ENCODE measurements at regions of chr22 and their contacts with region 1.

Region 1: GRCh38 chr22:17171313-17172171 is 12.5 kb upstream of the HDHD5 start:
- DNase-seq: peak; percentile 82
- ATAC-seq: peak; percentile 93
- H3K4me3 ChIP-seq: peak overlapping the region; percentile 62 to 69
- H3K27ac ChIP-seq: peak overlapping the region; percentile 98
- H3K4me1 ChIP-seq: peaks cover 10% of the 10 kb centered on the region in 2 experiments
- H3K27me3 ChIP-seq: no peaks in the 10 kb centered on the region
- CTCF ChIP-seq: peak; percentile 53 to 88 (median 68); a peak in 5 of 6 replicates
- POLR2A ChIP-seq: peak; percentile 55
- RAD21 ChIP-seq: peak; percentile 24

Region 2: DNA sequence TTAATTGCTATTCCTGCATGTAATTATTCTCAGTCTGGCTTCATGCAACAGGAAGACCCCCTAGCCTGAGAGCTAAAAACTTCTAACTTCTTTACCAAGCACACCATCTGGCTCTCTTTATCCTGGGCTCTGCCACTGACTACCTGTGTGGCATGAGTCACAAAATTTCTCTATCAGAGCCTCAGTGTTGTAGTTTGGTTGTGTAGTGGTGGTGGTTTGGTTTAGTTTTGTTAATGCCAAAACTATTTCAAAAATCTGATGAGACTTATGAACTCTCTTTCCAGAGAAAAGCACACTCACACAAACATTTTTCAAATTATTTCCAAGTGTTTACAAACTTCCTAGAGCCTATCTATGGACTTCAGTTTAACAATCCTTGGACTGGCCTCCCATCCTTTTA is 94.3 kb before region 1 on chr22:
- CTCF ChIA-PET with region 1: interaction called, 53 read pairs
- POLR2A ChIA-PET with region 1: interaction called, 3 read pairs
- RAD21 ChIA-PET with region 1: interaction called, 3 read pairs
- intact Hi-C with region 1: loop called (anchors 1 kb)
- DNase-seq: no peak
- ATAC-seq: no peak; the same call in 1 of the 2 replicates
- H3K4me3 ChIP-seq: no peak overlapping the region
- H3K27ac ChIP-seq: no peak overlapping the region
- H3K4me1 ChIP-seq: peaks cover 9 to 24% of the 10 kb centered on the region in 2 experiments
- H3K27me3 ChIP-seq: no peaks in the 10 kb centered on the region
- CTCF ChIP-seq: no peak
- POLR2A ChIP-seq: no peak
- RAD21 ChIP-seq: no peak

Region 3: DNA sequence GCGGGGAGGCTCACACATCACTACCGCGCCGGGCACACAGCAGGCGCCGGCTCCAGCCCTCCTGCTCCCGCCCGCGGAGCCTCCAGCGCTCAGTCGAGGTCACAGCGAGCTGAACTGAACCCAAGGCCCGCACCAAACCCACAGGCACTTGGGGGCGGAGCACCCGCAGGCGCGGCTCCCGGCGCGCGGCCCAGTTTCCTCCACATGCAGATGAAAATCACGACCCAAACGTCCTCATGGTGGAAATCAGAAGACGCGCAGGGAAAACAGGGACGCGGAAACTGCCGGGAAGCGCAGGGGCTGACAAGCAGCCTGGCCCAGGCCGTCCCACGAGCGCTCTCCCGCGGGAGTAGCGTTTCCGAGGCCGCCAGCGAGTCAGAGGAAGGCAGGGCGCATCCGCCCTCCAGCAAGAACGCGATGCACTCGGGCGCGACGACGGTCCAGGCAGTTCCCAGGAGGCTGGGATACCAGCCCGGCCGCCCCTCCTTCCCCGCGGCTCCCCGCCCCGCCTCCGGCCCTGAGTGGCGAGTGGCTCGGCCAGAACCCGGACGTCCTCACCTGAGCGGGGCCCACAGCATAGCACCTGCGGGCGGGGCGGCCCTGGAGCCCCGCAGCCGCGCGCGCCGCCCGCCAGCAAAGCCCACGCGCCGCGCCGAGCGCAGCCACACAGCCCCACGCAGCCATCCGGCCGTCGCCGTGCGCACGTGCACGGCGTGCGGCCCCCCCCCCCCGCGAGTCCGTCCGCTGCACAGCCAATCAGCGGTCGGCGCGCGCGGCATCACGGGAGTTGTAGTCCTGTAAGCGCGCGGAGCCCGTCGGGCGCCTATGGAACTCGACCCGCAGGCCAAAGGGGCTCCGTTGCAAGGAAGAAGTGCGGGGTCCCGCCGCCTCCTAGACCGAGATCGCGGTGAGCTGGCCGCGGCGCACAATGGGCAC is 12.7 kb before region 1 on chr22 and contains the start of gene HDHD5:
- CTCF ChIA-PET with region 1: interaction called, 125 read pairs
- POLR2A ChIA-PET with region 1: interaction called, 8 read pairs
- RAD21 ChIA-PET with region 1: interaction called, 3 read pairs
- intact Hi-C with region 1: loop called (anchors 1 kb)
- DNase-seq: peak; percentile 67
- ATAC-seq: peak; percentile 84
- H3K4me3 ChIP-seq: peak within 1 kb of the TSS; percentile 71 to 82
- H3K27ac ChIP-seq: peak within 1 kb of the TSS; percentile 94
- H3K4me1 ChIP-seq: peaks cover 16 to 27% of the 10 kb centered on the region in 2 experiments
- H3K27me3 ChIP-seq: no peaks in the 10 kb centered on the region
- CTCF ChIP-seq: no peak
- POLR2A ChIP-seq: peak; percentile 20
- RAD21 ChIP-seq: no peak
- total RNA-seq, gene HDHD5: 70.1 TPM

Region 4: DNA sequence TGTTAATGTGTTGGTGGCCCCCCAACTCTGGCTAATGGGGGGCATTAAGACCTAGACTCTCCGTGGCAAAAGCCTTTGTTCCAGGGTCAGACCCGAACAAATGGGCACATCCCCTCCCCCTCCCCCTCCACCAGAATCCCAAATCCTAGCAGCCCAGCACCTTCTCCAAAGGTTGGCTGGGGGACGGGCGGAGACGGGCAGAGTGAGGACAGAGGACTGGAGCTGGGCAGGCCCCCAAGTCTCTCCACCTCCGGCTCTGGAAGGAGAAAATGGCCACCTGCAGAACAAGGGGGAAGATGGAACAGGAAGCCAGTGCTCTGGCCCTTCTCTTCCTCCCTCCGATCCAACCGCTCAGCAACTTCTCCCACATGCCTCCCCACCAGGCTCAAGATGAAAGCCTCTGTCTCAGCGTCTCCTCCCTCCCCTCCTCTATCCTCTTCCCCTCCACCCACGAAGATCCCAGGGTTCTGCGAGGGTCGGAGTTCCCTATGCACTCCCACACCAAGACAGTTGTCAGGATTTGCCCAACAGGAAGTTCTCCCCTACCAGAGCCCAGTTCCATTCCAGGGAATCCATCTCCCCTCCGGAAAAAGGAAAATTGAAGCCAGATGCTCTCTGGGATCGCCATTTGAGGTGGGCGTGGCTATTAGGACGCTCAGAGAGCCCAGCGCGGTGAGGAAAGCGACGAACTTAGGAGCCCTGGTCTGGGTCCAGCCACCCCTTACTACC is 27.6 kb after region 1 on chr22:
- CTCF ChIA-PET with region 1: interaction called, 14 read pairs
- POLR2A ChIA-PET with region 1: no interaction called
- RAD21 ChIA-PET with region 1: no interaction called
- intact Hi-C with region 1: no loop called
- DNase-seq: no peak
- ATAC-seq: no peak
- H3K4me3 ChIP-seq: no peak overlapping the region
- H3K27ac ChIP-seq: no peak overlapping the region
- H3K4me1 ChIP-seq: no peaks in the 10 kb centered on the region
- H3K27me3 ChIP-seq: no peaks in the 10 kb centered on the region
- CTCF ChIP-seq: no peak
- POLR2A ChIP-seq: no peak
- RAD21 ChIP-seq: no peak

Region 5: DNA sequence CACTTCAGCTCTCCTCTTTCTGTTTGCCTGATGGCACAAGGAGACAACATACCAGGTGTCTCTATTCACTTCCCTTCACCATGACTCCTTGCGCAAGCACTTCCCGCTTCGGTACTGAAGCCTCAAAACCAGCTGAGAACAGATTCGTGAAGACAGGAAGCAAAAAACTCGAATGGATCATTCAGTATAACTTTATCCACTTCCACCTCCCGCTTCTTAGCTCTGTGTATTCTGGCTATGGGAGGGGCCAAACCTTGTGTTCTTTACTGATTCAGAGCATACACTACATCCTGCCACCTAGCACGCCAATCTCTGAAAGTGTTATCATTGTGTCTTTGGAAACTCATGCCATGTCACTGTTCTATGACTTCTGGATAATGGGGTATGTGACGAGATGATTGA is 109.9 kb after region 1 on chr22:
- CTCF ChIA-PET with region 1: interaction called, 10 read pairs
- POLR2A ChIA-PET with region 1: no interaction called
- RAD21 ChIA-PET with region 1: no interaction called
- intact Hi-C with region 1: no loop called
- DNase-seq: no peak
- ATAC-seq: no peak
- H3K4me3 ChIP-seq: no peak overlapping the region
- H3K27ac ChIP-seq: no peak overlapping the region
- H3K4me1 ChIP-seq: no peaks in the 10 kb centered on the region
- H3K27me3 ChIP-seq: no peaks in the 10 kb centered on the region
- CTCF ChIP-seq: no peak
- POLR2A ChIP-seq: no peak
- RAD21 ChIP-seq: no peak

Region 6: DNA sequence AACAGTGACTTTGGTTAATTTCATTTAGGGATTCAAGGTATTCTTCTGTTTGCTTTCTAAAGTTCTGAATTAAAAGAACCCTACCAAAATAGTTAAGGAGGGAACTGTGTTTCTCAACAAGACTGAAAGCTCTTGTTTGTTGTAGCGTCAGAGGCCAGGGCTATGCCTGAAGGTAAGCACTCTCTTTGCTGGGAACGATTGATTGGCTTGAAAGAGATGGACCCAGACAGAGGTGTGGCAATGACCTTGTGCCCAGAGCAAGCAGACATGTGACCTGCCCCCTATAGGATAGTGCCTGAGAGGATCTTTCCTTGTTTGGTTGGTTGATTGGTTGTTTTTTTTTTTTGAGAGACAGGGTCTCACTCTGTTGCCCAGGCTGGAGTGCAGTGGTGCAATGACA is 129.4 kb after region 1 on chr22:
- CTCF ChIA-PET with region 1: no interaction called
- POLR2A ChIA-PET with region 1: no interaction called
- RAD21 ChIA-PET with region 1: no interaction called
- intact Hi-C with region 1: no loop called
- DNase-seq: no peak
- ATAC-seq: no peak
- H3K4me3 ChIP-seq: no peak overlapping the region
- H3K27ac ChIP-seq: no peak overlapping the region
- H3K4me1 ChIP-seq: no peaks in the 10 kb centered on the region
- H3K27me3 ChIP-seq: no peaks in the 10 kb centered on the region
- CTCF ChIP-seq: no peak
- POLR2A ChIP-seq: no peak
- RAD21 ChIP-seq: no peak

Measured in HCT116 (cell line).